ENCODE measurements at regions of chr14 and their contacts with region 1.

Region 1: DNA sequence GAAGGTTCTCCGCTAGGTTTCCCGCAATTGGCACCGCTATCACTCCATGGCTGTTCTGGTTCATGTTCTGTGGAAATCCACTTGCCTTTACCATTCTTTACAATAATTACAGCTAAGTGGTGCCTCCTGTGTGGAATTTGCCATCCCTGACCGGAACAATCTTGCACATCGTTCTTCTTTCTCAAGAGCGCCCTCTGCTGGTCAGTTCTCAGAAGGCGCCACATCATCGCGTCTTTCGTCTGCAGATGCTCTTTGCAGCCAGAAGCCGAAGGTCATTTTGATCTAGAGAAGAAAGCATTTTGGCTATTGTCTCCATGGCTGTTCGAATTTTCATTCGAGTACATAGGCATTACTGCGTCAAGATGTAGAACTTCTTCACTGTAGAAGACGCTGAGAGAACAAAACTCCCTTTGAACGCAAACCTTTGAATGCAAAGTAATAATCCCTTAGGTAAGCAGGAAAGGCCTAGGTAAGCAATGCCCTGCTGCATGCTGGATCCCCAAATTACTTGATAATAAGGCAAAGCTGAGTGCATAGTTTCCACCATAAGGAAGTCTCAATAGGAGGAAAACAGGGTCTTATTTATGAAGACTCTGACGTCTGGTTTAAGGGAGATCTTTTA is 10.1 kb upstream of the RTRAF start:
- DNase-seq: peak; percentile 46
- CTCF ChIP-seq: peak; percentile 87

Region 2: GRCh38 chr14:51846631-51847488 is 132.3 kb before region 1 on chr14:
- in situ Hi-C with region 1: loop called (anchors 10 kb)
- DNase-seq: peak; percentile 77
- CTCF ChIP-seq: no peak